ENCODE measurements at regions of chr1 and their contacts with region 1.

Region 1: GRCh38 chr1:27725374-27726173 is at the start of gene FAM76A:
- DNase-seq: peak; percentile 89 to 99
- ATAC-seq: peak; percentile 98 to 99
- H3K4me3 ChIP-seq: peak within 1 kb of the TSS; percentile 84
- H3K27ac ChIP-seq: peak within 1 kb of the TSS; percentile 81 to 94
- H3K4me1 ChIP-seq: peaks cover 9% of the 10 kb centered on the region; the same call in 2 of the 3 replicates
- CTCF ChIP-seq: peak; percentile 46
- EP300 ChIP-seq: no peak
- POLR2A ChIP-seq: peak; percentile 26
- RAD21 ChIP-seq: no peak; a peak in 1 of 5 replicates
- polyA plus RNA-seq, gene FAM76A: 6.5 and 7.0 TPM in 2 replicates

Region 2: DNA sequence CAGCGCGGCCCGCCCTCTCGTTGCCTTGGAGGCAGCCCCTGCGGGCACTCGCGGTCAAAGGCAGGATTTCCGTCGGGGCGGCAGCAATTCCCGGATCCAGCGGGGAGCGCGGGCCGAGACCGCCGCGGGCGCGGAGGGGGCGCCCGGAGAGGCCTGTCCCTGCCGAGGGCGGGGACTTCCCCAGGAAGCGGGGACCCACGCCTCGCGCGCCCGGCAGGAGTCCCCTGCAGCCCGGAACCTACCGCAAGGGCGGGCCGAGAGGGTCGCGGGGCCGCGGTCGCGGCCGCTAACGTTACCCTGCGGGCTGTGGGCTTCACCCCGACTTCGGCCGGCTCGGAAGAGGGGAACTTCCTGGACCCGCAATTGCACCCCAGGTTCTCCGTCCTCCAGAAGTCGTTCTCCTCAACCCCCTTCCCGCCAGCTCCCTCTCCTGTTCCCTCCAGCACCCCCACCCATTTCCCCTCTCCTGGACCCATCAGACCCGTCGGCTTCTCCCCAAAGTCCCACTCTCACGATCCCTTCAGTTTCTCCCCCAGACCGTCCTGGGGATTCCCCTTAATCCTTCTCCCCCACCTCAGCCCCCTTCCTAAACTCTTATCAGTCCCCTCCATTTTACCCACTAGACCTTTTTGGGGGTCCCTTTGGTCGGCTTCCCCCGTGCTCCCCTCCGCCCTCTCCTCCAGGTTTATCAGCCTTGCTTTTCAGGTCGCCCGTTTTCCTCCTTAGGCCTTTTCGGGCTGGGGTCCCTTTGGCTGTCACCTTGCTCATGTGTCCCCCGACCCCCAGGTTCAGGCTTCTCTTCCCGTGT is 91.2 kb before region 1 on chr1:
- CTCF ChIA-PET with region 1: no interaction called
- POLR2A ChIA-PET with region 1: no interaction called
- DNase-seq: no peak
- ATAC-seq: no peak
- H3K4me3 ChIP-seq: no peak overlapping the region
- H3K27ac ChIP-seq: no peak overlapping the region
- H3K4me1 ChIP-seq: no peaks in the 10 kb centered on the region
- CTCF ChIP-seq: no peak
- EP300 ChIP-seq: no peak
- POLR2A ChIP-seq: no peak
- RAD21 ChIP-seq: no peak

Region 3: GRCh38 chr1:27772933-27773825 is 47.6 kb after region 1 on chr1 and contains the start of gene STX12:
- CTCF ChIA-PET with region 1: no interaction called
- POLR2A ChIA-PET with region 1: interaction called, 19 read pairs
- DNase-seq: peak; percentile 95 to 97
- ATAC-seq: peak; percentile 98 to 99
- H3K4me3 ChIP-seq: peak within 1 kb of the TSS; percentile 84
- H3K27ac ChIP-seq: peak within 1 kb of the TSS; percentile 72 to 90
- H3K4me1 ChIP-seq: peaks cover 15% of the 10 kb centered on the region; the same call in 2 of the 3 replicates
- CTCF ChIP-seq: no peak
- EP300 ChIP-seq: no peak
- POLR2A ChIP-seq: peak; percentile 74
- RAD21 ChIP-seq: no peak
- polyA plus RNA-seq, gene STX12: 12.8 and 14.6 TPM in 2 replicates

Region 4: DNA sequence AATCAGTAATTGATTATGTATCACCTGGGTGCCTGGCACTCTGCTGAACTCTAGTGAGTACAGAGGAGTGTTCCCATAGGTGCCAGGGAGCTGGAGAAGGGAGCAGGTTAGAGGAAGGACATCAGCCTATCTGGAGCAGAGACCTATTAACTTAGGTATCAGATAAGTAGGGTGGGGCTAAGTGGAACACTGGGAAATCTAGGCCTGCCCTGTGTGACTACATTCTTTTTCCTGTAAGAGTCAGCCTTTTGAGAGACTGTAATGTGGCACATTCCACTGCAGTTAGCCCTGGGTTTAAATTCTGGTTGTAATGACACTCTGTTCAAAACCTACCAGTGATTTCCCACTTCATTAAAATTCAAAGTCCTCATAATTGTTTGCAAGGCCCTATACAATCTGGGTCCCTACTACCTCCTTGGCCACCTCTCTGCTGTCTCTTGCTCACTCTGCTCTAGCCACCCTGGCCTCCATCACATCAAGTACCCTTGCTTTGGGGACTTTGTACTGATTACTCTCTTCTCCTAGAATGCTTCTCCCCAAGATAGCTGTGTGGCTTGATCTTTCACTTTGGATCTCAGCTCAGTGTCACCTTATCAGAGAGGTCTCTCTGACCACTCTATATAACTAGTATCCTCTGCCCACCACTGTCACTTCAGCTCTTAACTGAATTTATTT is 60.3 kb after region 1 on chr1:
- CTCF ChIA-PET with region 1: no interaction called
- POLR2A ChIA-PET with region 1: no interaction called
- DNase-seq: no peak
- ATAC-seq: peak in 1 of 2 experiments; percentile 47; a peak in 3 of 6 replicates
- H3K4me3 ChIP-seq: no peak overlapping the region
- H3K27ac ChIP-seq: no peak overlapping the region
- H3K4me1 ChIP-seq: no peaks in the 10 kb centered on the region
- CTCF ChIP-seq: no peak
- EP300 ChIP-seq: no peak
- POLR2A ChIP-seq: no peak
- RAD21 ChIP-seq: no peak